Caco-2 (cell line): ENCODE measurements at regions of chr7 and their contacts with region 1.

Region 1: DNA sequence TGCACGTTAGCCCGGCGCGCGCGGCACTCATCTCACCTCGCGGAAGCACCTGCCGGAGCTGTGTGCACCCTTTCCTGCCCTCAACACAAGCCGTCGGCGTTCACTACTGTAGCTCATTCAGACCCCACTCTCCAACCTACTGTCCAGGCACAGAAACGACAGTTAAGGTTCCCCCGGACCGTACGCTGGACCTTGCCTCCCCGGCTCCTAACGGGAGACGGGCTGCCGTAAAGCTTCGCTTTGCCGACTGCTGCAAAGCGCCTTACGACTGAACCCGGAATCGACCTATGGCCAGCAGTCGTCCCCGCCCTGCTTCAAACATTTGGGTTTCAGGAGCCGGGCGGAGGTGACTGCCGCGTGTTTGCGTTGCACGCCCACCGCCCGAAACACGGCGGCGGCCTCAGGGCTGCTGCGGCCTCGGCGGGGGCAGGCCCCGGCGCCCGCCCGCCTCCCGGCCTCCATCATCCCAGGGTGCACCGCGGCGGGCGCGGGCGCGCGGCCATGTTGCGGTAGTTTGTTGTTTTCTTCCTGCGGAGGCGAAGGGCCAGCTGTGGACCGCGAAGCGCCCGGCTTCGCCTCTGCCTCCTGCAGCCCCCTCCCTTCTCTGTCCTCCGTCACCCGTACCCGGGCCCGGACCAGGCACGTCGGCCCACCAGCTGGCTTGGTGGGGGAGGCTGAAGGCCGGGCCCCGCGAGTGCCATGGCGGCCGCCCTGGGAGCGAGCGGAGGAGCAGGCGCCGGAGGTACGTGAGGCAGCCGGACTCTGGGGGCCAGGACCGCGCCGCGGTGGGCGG is at the start of gene RBM33:
- DNase-seq: peak; percentile 91 to 93
- H3K4me3 ChIP-seq: peak within 1 kb of the TSS; percentile 95
- H3K4me3 Mint-ChIP-seq: peak within 1 kb of the TSS; percentile 98
- H3K27ac Mint-ChIP-seq: peak within 1 kb of the TSS; percentile 98
- H3K4me1 ChIP-seq: peaks cover 15% of the 10 kb centered on the region
- H3K4me1 Mint-ChIP-seq: peaks cover 29% of the 10 kb centered on the region
- H3K27me3 ChIP-seq: no peaks in the 10 kb centered on the region
- H3K27me3 Mint-ChIP-seq: no peaks in the 10 kb centered on the region
- CTCF ChIP-seq: no peak
- total RNA-seq, gene RBM33: 82.8 and 89.9 TPM in 2 replicates

Region 2: GRCh38 chr7:155466814-155467733 is 177.3 kb before region 1 on chr7:
- CTCF ChIA-PET with region 1: no interaction called
- POLR2A ChIA-PET with region 1: no interaction called
- intact Hi-C with region 1: no loop called
- DNase-seq: peak in 1 of 2 experiments; percentile 15
- H3K4me3 ChIP-seq: peak overlapping the region; percentile 15; the same call in 1 of the 2 replicates
- H3K4me3 Mint-ChIP-seq: peak overlapping the region; percentile 47
- H3K27ac Mint-ChIP-seq: no peak overlapping the region
- H3K4me1 ChIP-seq: peaks cover 2% of the 10 kb centered on the region; the same call in 1 of the 2 replicates
- H3K4me1 Mint-ChIP-seq: no peaks in the 10 kb centered on the region
- H3K27me3 ChIP-seq: no peaks in the 10 kb centered on the region
- H3K27me3 Mint-ChIP-seq: no peaks in the 10 kb centered on the region
- CTCF ChIP-seq: peak in 1 of 2 experiments; percentile 16

Region 3: GRCh38 chr7:155570171-155570958 is 74.0 kb before region 1 on chr7:
- CTCF ChIA-PET with region 1: no interaction called
- POLR2A ChIA-PET with region 1: no interaction called
- intact Hi-C with region 1: no loop called
- DNase-seq: no peak
- H3K4me3 ChIP-seq: no peak overlapping the region
- H3K4me3 Mint-ChIP-seq: no peak overlapping the region
- H3K27ac Mint-ChIP-seq: no peak overlapping the region
- H3K4me1 ChIP-seq: 0 out of 2 replicates have a peak, but pooled peaks cover 2% of the 10 kb centered on the region
- H3K4me1 Mint-ChIP-seq: no peaks in the 10 kb centered on the region
- H3K27me3 ChIP-seq: no peaks in the 10 kb centered on the region
- H3K27me3 Mint-ChIP-seq: no peaks in the 10 kb centered on the region
- CTCF ChIP-seq: no peak

Region 4: GRCh38 chr7:155618708-155619633 is 25.4 kb before region 1 on chr7:
- CTCF ChIA-PET with region 1: interaction called, 10 read pairs
- POLR2A ChIA-PET with region 1: interaction called, 17 read pairs
- intact Hi-C with region 1: loop called (anchors 1 kb)
- DNase-seq: peak; percentile 91 to 96
- H3K4me3 ChIP-seq: peak overlapping the region; percentile 15; the same call in 1 of the 2 replicates
- H3K4me3 Mint-ChIP-seq: peak overlapping the region; percentile 70
- H3K27ac Mint-ChIP-seq: peak overlapping the region; percentile 95
- H3K4me1 ChIP-seq: peaks cover 33% of the 10 kb centered on the region
- H3K4me1 Mint-ChIP-seq: peaks cover 19% of the 10 kb centered on the region
- H3K27me3 ChIP-seq: no peaks in the 10 kb centered on the region
- H3K27me3 Mint-ChIP-seq: no peaks in the 10 kb centered on the region
- CTCF ChIP-seq: peak; percentile 21 to 35

Region 5: GRCh38 chr7:155665957-155666287 is 21.5 kb after region 1 on chr7:
- CTCF ChIA-PET with region 1: no interaction called
- POLR2A ChIA-PET with region 1: no interaction called
- intact Hi-C with region 1: loop called (anchors 2 kb)
- DNase-seq: no peak
- H3K4me3 ChIP-seq: no peak overlapping the region
- H3K4me3 Mint-ChIP-seq: no peak overlapping the region
- H3K27ac Mint-ChIP-seq: no peak overlapping the region
- H3K4me1 ChIP-seq: no peaks in the 10 kb centered on the region
- H3K4me1 Mint-ChIP-seq: peaks cover 18% of the 10 kb centered on the region
- H3K27me3 ChIP-seq: no peaks in the 10 kb centered on the region
- H3K27me3 Mint-ChIP-seq: no peaks in the 10 kb centered on the region
- CTCF ChIP-seq: no peak